ENCODE measurements at regions of chr10 and their contacts with region 1.

Region 1: DNA sequence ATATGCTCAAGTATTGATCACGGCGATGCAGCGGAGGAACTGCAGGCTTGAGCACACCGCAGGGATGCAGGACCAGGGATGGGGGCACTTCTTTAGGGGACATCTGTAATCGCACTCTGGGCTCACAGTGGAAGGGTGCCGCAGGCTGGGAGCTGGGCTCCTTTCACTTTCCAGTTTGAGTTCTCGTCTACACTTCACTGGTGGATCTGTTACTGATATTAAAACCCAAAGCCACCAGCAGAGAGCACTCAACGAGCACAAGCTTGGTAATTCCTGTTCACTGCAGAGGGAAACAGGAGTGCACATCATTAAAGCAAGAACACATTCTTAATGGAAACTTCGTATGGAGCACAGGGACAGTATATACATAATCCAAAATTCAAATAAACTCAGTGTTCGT is 91.3 kb downstream of the PARD3 start:
- DNase-seq: no peak
- ATAC-seq: peak; percentile 77
- H3K4me3 ChIP-seq: no peak overlapping the region
- H3K27ac ChIP-seq: no peak overlapping the region
- H3K4me1 ChIP-seq: no peaks in the 10 kb centered on the region
- H3K27me3 ChIP-seq: no peaks in the 10 kb centered on the region
- CTCF ChIP-seq: peak; percentile 39 to 70 (median 39); a peak in 4 of 6 replicates
- EP300 ChIP-seq: no peak
- POLR2A ChIP-seq: no peak
- RAD21 ChIP-seq: peak; percentile 71

Region 2: DNA sequence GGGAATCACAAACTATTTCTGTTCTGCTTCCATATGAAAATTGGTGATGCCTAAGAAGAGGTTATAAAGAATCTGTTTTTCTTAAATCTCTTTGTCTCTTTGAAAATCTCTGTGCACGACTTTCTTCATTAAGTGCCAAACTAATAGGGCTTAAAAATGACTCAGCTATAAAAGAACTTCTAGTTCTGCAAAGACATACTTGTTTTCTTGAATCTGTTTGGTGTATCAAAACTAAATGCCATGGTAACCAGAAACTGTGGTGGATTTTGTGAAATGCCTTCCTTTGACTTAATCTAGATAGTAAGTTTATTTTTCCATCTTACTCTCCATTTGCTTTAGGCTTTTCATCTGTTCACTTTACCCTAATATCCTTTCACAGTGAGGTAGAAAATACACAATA is 326.4 kb before region 1 on chr10:
- CTCF ChIA-PET with region 1: no interaction called
- POLR2A ChIA-PET with region 1: no interaction called
- RAD21 ChIA-PET with region 1: no interaction called
- SMC1A ChIA-PET with region 1: no interaction called
- in situ Hi-C with region 1: no loop called
- intact Hi-C with region 1: no loop called
- DNase-seq: no peak
- ATAC-seq: no peak
- H3K4me3 ChIP-seq: no peak overlapping the region
- H3K27ac ChIP-seq: no peak overlapping the region
- H3K4me1 ChIP-seq: no peaks in the 10 kb centered on the region
- H3K27me3 ChIP-seq: no peaks in the 10 kb centered on the region
- CTCF ChIP-seq: no peak
- EP300 ChIP-seq: no peak
- POLR2A ChIP-seq: no peak
- RAD21 ChIP-seq: no peak

Region 3: GRCh38 chr10:34565934-34566333 is 157.8 kb before region 1 on chr10:
- CTCF ChIA-PET with region 1: no interaction called
- POLR2A ChIA-PET with region 1: no interaction called
- RAD21 ChIA-PET with region 1: no interaction called
- SMC1A ChIA-PET with region 1: no interaction called
- in situ Hi-C with region 1: no loop called
- intact Hi-C with region 1: no loop called
- DNase-seq: no peak
- ATAC-seq: no peak
- H3K4me3 ChIP-seq: no peak overlapping the region
- H3K27ac ChIP-seq: no peak overlapping the region
- H3K4me1 ChIP-seq: no peaks in the 10 kb centered on the region
- H3K27me3 ChIP-seq: no peaks in the 10 kb centered on the region
- CTCF ChIP-seq: no peak
- EP300 ChIP-seq: no peak
- POLR2A ChIP-seq: no peak
- RAD21 ChIP-seq: no peak

Region 4: GRCh38 chr10:34655286-34656170 is 68.2 kb before region 1 on chr10:
- CTCF ChIA-PET with region 1: interaction called, 37 read pairs
- POLR2A ChIA-PET with region 1: no interaction called
- RAD21 ChIA-PET with region 1: interaction called, 22 read pairs
- SMC1A ChIA-PET with region 1: interaction called, 16 read pairs
- in situ Hi-C with region 1: no loop called
- intact Hi-C with region 1: no loop called
- DNase-seq: no peak
- ATAC-seq: peak; percentile 71
- H3K4me3 ChIP-seq: no peak overlapping the region
- H3K27ac ChIP-seq: no peak overlapping the region
- H3K4me1 ChIP-seq: no peaks in the 10 kb centered on the region
- H3K27me3 ChIP-seq: no peaks in the 10 kb centered on the region
- CTCF ChIP-seq: peak; percentile 57 to 70 (median 66)
- EP300 ChIP-seq: no peak
- POLR2A ChIP-seq: no peak
- RAD21 ChIP-seq: peak; percentile 56

Region 5: GRCh38 chr10:34739915-34740314 is 16.2 kb after region 1 on chr10:
- CTCF ChIA-PET with region 1: interaction called, 54 read pairs
- POLR2A ChIA-PET with region 1: interaction called, 4 read pairs
- RAD21 ChIA-PET with region 1: interaction called, 28 read pairs
- SMC1A ChIA-PET with region 1: interaction called, 25 read pairs
- in situ Hi-C with region 1: no loop called
- intact Hi-C with region 1: no loop called
- DNase-seq: no peak
- ATAC-seq: peak; percentile 28
- H3K4me3 ChIP-seq: no peak overlapping the region
- H3K27ac ChIP-seq: no peak overlapping the region
- H3K4me1 ChIP-seq: no peaks in the 10 kb centered on the region
- H3K27me3 ChIP-seq: peaks cover 0 to 11% of the 10 kb centered on the region in 2 experiments; a peak in 2 of 4 replicates
- CTCF ChIP-seq: no peak
- EP300 ChIP-seq: no peak
- POLR2A ChIP-seq: no peak
- RAD21 ChIP-seq: no peak

Region 6: GRCh38 chr10:34773636-34774630 is 50.2 kb after region 1 on chr10:
- CTCF ChIA-PET with region 1: interaction called, 83 read pairs
- POLR2A ChIA-PET with region 1: interaction called, 8 read pairs
- RAD21 ChIA-PET with region 1: interaction called, 50 read pairs
- SMC1A ChIA-PET with region 1: interaction called, 53 read pairs
- in situ Hi-C with region 1: no loop called
- intact Hi-C with region 1: no loop called
- DNase-seq: no peak
- ATAC-seq: peak; percentile 44
- H3K4me3 ChIP-seq: no peak overlapping the region
- H3K27ac ChIP-seq: no peak overlapping the region
- H3K4me1 ChIP-seq: no peaks in the 10 kb centered on the region
- H3K27me3 ChIP-seq: no peaks in the 10 kb centered on the region
- CTCF ChIP-seq: no peak
- EP300 ChIP-seq: peak in 1 of 2 experiments; percentile 23; a peak in 1 of 4 replicates
- POLR2A ChIP-seq: no peak
- RAD21 ChIP-seq: no peak

Region 7: GRCh38 chr10:34824870-34825269 is 101.1 kb after region 1 on chr10:
- CTCF ChIA-PET with region 1: interaction called, 36 read pairs
- POLR2A ChIA-PET with region 1: no interaction called
- RAD21 ChIA-PET with region 1: interaction called, 24 read pairs
- SMC1A ChIA-PET with region 1: interaction called, 49 read pairs
- in situ Hi-C with region 1: no loop called
- intact Hi-C with region 1: no loop called
- DNase-seq: no peak
- ATAC-seq: peak; percentile 85
- H3K4me3 ChIP-seq: no peak overlapping the region
- H3K27ac ChIP-seq: no peak overlapping the region
- H3K4me1 ChIP-seq: no peaks in the 10 kb centered on the region
- H3K27me3 ChIP-seq: no peaks in the 10 kb centered on the region; a peak in 1 of 4 replicates
- CTCF ChIP-seq: peak in 2 of 3 experiments; percentile 15 to 31; a peak in 2 of 6 replicates
- EP300 ChIP-seq: no peak
- POLR2A ChIP-seq: no peak
- RAD21 ChIP-seq: no peak

Region 8: DNA sequence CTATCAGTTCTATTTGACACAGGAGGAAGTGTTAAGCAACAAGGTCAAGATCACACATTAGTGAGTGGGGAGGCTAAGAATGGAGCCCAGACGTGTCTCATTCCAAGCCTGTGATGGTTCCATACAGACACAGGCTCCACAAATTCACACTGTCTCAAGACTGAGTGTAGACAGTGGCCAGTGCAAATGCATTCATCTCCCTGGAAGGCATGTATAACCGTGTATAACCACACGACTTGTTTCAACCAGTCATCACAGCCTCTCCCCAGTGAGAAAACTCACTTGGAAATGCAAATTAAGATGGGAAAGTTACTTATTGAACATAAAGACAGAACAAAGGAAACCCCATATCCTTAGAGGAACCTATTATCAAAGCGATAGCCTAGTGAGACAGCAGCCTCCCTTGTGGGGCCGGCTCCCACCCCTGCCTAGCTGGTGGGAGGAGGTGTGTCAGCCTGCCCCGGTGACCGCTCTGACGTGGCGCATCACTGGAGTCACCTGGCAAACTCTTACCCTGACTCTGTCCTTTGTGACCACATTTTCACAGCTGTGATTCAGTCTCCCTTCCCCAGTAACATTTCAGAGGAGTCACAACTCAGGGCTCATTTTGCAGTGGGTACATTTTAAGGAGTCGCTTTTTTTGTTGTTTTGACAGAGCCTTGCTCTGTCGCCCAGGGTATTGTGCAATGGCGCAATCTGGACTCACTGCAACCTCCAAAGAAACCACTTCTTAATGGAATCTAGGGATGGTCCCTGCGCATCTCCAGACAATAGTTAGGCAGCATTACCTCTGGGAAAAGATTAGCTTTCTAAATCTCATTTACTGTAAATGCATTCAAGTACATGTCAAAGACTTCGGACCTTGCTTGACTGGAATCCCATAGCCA is 218.0 kb after region 1 on chr10:
- CTCF ChIA-PET with region 1: interaction called, 23 read pairs
- POLR2A ChIA-PET with region 1: no interaction called
- RAD21 ChIA-PET with region 1: interaction called, 6 read pairs
- SMC1A ChIA-PET with region 1: interaction called, 12 read pairs
- in situ Hi-C with region 1: no loop called
- intact Hi-C with region 1: loop called (anchors 10 kb)
- DNase-seq: no peak
- ATAC-seq: peak; percentile 85
- H3K4me3 ChIP-seq: no peak overlapping the region
- H3K27ac ChIP-seq: no peak overlapping the region
- H3K4me1 ChIP-seq: no peaks in the 10 kb centered on the region
- H3K27me3 ChIP-seq: no peaks in the 10 kb centered on the region
- CTCF ChIP-seq: no peak
- EP300 ChIP-seq: no peak
- POLR2A ChIP-seq: no peak
- RAD21 ChIP-seq: no peak

Region 9: DNA sequence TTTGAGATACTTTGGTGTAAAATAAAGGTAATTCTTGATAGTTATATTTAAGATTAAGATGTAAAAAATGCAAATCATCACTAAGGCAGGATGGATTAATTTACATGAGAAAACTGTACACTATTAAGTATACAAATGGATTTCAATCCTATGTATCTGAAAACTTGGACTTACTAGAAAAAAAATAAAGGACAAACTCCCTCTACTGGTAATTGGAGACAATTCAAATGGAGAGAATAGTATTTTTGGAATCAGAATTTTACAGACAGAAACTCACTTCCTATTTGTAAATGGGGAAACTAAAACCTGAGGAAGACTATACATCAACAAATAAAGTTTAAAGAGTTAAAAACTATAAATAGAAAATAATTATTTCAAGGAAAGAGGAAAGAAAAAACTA is 303.8 kb after region 1 on chr10:
- CTCF ChIA-PET with region 1: interaction called, 15 read pairs
- POLR2A ChIA-PET with region 1: no interaction called
- RAD21 ChIA-PET with region 1: interaction called, 14 read pairs
- SMC1A ChIA-PET with region 1: interaction called, 11 read pairs
- in situ Hi-C with region 1: no loop called
- intact Hi-C with region 1: no loop called
- DNase-seq: no peak
- ATAC-seq: no peak
- H3K4me3 ChIP-seq: no peak overlapping the region
- H3K27ac ChIP-seq: no peak overlapping the region
- H3K4me1 ChIP-seq: no peaks in the 10 kb centered on the region
- H3K27me3 ChIP-seq: no peaks in the 10 kb centered on the region
- CTCF ChIP-seq: no peak; a peak in 2 of 6 replicates
- EP300 ChIP-seq: no peak
- POLR2A ChIP-seq: no peak
- RAD21 ChIP-seq: no peak